ENCODE measurements at regions of chr22 and their contacts with region 1.

Region 1: GRCh38 chr22:37199103-37199759 is 11.2 kb upstream of the C1QTNF6 start:
- DNase-seq: peak; percentile 100
- ATAC-seq: peak; percentile 98
- H3K4me3 Mint-ChIP-seq: peak overlapping the region; percentile 87
- H3K27ac Mint-ChIP-seq: peak overlapping the region; percentile 96
- H3K4me1 Mint-ChIP-seq: peaks cover 71% of the 10 kb centered on the region
- H3K27me3 Mint-ChIP-seq: no peaks in the 10 kb centered on the region

Region 2: DNA sequence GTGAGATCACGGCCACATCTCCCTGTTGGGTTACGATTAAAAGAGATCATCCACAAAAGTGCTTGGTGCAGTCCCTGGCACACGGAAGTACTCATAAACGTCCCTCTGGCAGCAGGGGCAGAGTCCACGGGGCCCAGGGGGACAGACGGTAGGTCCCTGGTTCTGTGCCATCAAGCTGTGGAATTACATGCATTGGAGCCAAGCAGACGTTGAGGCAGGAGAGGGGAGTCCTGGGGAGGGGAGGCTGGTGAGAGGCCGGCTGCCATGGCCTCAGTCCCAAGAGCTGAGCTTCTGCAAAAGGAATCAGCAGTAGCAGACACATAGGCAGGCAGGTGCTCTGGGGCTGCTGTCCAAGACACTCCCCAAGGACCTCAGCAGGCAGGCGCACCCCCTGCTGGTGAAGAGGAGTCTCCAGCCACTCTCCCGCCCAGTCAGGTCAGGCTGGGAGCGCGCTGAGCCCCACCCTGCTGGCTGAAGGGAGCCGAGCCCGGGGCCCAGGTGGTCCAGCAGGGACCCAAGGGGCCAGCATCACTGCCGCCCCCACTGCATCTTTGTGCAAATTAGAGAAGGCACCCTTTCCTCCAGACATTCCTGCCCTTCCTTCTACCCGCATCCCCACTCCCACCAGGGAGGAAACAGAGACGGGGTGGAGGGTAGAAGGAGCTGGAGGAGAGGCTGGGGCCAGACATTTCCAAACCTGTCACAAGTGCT is 155.2 kb before region 1 on chr22:
- CTCF ChIA-PET with region 1: interaction called, 18 read pairs
- POLR2A ChIA-PET with region 1: interaction called, 3 read pairs
- DNase-seq: peak; percentile 72
- ATAC-seq: peak; percentile 99
- H3K4me3 Mint-ChIP-seq: no peak overlapping the region
- H3K27ac Mint-ChIP-seq: no peak overlapping the region
- H3K4me1 Mint-ChIP-seq: peaks cover 23% of the 10 kb centered on the region
- H3K27me3 Mint-ChIP-seq: peaks cover 9% of the 10 kb centered on the region

Region 3: GRCh38 chr22:37121887-37122591 is 77.2 kb before region 1 on chr22:
- CTCF ChIA-PET with region 1: interaction called, 54 read pairs
- POLR2A ChIA-PET with region 1: interaction called, 7 read pairs
- DNase-seq: peak; percentile 97
- ATAC-seq: peak; percentile 98
- H3K4me3 Mint-ChIP-seq: peak overlapping the region; percentile 78
- H3K27ac Mint-ChIP-seq: peak overlapping the region; percentile 100
- H3K4me1 Mint-ChIP-seq: peaks cover 90% of the 10 kb centered on the region
- H3K27me3 Mint-ChIP-seq: no peaks in the 10 kb centered on the region

Region 4: GRCh38 chr22:37166675-37167066 is 32.6 kb before region 1 on chr22:
- CTCF ChIA-PET with region 1: interaction called, 280 read pairs
- POLR2A ChIA-PET with region 1: interaction called, 34 read pairs
- DNase-seq: peak; percentile 92
- ATAC-seq: peak; percentile 48
- H3K4me3 Mint-ChIP-seq: peak overlapping the region; percentile 83
- H3K27ac Mint-ChIP-seq: peak overlapping the region; percentile 96
- H3K4me1 Mint-ChIP-seq: peaks cover 93% of the 10 kb centered on the region
- H3K27me3 Mint-ChIP-seq: no peaks in the 10 kb centered on the region

Region 5: DNA sequence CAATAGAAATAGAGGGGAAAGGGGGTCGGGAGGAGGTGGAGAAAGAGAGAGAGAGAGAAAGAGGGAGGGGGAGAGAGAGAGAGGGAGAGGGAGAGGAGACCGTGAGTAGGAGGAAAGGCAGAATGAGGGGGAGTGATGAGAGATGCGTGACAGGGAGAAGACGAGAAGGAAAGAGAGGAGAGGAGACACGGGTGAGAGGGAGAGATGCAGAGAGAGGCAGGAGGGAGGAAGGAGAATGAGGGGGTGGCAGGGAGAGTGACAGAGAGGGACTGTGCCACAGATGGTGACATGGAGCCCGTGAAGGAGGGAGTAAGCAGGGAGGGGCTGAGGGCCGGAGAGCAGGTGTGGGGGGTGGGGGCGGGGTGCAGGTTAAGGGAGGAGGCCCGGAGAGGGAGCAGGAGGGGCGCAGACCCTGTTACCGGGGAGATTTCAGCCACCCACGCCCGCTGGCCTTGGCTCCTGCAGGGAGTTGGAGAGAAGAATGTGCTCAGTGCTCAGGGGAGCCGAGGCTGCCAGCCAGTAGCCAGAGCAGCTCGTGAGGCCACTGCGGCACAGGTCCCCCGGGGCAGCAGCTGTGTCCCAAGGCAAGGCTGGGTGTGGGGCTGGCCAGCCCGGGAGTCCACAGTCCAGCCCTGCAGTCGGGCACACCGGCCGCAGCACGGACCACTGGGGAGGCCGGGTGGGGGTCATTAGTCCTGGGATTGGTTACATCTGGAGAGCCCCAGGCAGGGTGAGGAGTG is 13.1 kb after region 1 on chr22 and contains the start of gene SSTR3:
- CTCF ChIA-PET with region 1: interaction called, 83 read pairs
- POLR2A ChIA-PET with region 1: interaction called, 6 read pairs
- DNase-seq: no peak
- ATAC-seq: no peak
- H3K4me3 Mint-ChIP-seq: no peak within 1 kb of the TSS
- H3K27ac Mint-ChIP-seq: no peak within 1 kb of the TSS
- H3K4me1 Mint-ChIP-seq: peaks cover 31% of the 10 kb centered on the region
- H3K27me3 Mint-ChIP-seq: no peaks in the 10 kb centered on the region
- total RNA-seq, gene SSTR3: 3.5 to 3.6 TPM

Region 6: DNA sequence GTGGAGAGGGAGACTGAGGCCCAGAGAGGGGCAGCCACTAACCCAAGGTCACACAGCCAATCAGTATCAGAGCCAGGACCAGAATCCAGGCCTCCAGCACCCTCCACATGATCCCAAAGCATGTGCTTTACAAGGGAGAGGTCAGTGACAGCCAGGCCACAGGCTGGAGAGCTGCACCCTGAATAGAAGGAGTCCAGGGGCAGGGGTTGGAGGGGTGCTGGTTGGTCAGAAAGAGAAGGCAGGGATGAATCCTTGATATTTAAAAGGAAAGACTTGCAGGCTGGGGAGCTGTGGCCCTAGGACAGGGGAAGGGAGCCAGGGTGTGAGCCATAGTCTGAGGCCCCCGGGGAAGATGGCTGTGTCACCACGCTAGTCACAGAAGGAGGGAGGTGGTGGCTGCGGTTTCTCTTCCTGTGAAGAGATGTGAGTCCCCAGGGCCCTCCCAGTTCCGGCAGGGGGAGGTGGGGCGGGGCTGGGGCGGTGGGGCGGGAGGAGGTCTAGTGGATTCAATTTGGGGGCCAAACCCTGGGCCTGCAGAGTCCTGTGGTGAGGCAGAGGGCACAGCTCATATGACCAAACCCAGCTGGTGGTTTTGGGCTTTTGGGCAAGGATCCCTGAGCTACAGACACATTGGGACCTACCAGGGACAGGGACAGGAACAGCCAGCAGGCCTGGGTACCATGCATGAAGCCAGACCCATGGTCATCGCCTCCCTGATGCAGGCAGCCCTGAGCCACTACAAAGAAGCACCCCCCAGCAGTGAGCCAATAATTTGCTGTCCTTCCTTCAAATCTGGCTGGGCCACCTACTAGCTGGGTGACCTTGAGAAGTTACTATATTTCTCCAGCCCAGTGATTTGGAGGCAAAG is 30.8 kb after region 1 on chr22:
- CTCF ChIA-PET with region 1: interaction called, 26 read pairs
- POLR2A ChIA-PET with region 1: interaction called, 12 read pairs
- DNase-seq: peak; percentile 97
- ATAC-seq: peak; percentile 76
- H3K4me3 Mint-ChIP-seq: peak overlapping the region; percentile 80
- H3K27ac Mint-ChIP-seq: peak overlapping the region; percentile 100
- H3K4me1 Mint-ChIP-seq: peaks cover 90% of the 10 kb centered on the region
- H3K27me3 Mint-ChIP-seq: no peaks in the 10 kb centered on the region

Region 7: DNA sequence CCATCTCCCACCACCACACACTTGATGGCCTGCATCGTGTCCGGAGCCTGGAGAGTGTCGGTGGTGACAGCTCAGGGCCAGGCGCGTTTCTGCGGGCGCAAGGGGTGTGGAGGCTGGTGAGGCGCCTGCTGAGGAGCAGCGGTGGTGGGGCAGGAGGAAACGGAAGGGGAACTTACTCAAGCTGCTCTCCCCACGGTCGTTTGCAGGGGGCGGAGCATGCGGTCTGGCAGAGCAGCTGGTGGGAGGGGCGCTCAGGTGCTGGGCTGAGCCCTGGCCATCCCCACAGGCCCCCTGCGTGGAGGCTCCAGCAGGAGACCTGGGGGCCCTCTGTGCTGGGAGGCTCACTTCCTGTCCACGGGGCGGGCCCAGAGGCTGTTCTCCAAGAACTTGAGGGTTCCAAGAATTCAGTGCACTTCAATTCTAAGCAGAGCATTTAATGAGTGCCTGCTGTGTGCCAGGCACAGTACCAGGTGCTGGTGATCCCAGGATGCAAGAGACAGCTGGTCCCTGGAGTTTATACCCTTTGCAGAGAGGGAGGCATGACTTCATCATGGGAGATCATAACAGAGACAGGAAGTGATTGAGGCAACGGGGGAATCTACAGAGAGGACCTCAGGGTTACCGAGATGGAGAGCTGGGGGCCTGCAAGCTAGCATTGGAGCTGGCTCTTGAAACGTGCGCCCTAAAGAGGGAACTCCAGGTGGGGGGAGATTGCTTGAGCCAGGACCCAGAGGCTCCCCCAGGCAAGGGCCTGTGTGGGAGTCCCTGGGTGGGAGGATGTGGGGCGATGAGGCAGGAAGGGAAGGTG is 45.1 kb after region 1 on chr22 and contains the start of gene RAC2:
- CTCF ChIA-PET with region 1: interaction called, 20 read pairs
- POLR2A ChIA-PET with region 1: interaction called, 23 read pairs
- DNase-seq: peak; percentile 98
- ATAC-seq: peak; percentile 62
- H3K4me3 Mint-ChIP-seq: peak within 1 kb of the TSS; percentile 99
- H3K27ac Mint-ChIP-seq: peak within 1 kb of the TSS; percentile 99
- H3K4me1 Mint-ChIP-seq: peaks cover 45% of the 10 kb centered on the region
- H3K27me3 Mint-ChIP-seq: no peaks in the 10 kb centered on the region
- total RNA-seq, gene RAC2: 1,167 to 1,252 TPM